GM13977 (cell line): ENCODE measurements at regions of chrX and their contacts with region 1.

Region 1: GRCh38 chrX:24732766-24733500 is 39.2 kb downstream of the POLA1 start:
- DNase-seq: no peak
- CTCF ChIP-seq: no peak

Region 2: DNA sequence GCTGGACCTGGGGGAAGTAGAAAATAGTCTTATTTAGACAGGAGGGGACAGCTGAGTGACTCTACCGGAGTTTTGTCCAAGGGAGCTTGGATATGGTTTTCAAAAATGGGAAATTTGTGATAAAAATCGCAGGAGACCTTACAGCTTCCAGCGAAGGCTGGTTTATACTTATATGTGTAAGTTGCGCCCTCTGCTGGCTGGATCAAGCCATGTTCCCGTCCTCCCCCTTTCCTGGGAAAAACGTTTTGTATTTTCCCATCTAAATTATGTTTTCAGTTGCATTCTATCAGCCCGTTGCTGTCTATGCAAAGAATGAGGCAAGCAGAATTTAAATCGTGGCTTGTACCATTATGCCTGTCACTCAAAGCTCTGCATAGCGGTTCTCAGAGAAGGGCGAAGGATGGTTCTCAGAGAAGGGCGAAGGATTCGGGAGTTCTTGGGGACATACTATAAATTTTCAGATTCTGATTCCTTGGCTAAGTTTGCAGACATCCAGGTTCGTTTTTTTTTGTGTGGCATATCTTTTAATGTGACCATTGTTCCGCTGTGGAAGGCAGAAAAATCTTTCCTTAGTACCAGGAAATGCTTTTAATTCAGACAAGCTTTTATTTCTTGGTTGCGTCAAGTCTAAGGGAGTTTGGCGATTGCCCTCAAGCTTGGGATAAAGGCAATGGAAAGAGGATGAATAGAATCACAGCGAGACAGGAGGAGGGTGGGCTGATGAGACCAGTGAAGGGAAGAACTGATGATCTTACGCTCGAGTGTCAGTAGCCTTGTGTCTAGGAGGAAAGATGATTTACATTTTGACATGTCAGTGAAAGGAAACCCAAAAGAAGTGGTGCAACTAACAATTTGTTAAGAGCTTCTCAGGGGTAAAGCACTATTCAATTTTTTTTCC is 411.4 kb after region 1 on chrX:
- in situ Hi-C with region 1: loop called (anchors 25 kb)
- DNase-seq: peak; percentile 17
- CTCF ChIP-seq: peak; percentile 78